Calu3 (cell line): ENCODE measurements at regions of chr2 and their contacts with region 1.

Region 1: GRCh38 chr2:165874445-165875039 is 79.0 kb downstream of the TTC21B start:
- DNase-seq: peak; percentile 24
- H3K4me3 Mint-ChIP-seq: no peak overlapping the region
- H3K27ac Mint-ChIP-seq: no peak overlapping the region
- H3K4me1 Mint-ChIP-seq: no peaks in the 10 kb centered on the region
- H3K27me3 Mint-ChIP-seq: no peaks in the 10 kb centered on the region
- CTCF ChIP-seq: peak; percentile 51

Region 2: DNA sequence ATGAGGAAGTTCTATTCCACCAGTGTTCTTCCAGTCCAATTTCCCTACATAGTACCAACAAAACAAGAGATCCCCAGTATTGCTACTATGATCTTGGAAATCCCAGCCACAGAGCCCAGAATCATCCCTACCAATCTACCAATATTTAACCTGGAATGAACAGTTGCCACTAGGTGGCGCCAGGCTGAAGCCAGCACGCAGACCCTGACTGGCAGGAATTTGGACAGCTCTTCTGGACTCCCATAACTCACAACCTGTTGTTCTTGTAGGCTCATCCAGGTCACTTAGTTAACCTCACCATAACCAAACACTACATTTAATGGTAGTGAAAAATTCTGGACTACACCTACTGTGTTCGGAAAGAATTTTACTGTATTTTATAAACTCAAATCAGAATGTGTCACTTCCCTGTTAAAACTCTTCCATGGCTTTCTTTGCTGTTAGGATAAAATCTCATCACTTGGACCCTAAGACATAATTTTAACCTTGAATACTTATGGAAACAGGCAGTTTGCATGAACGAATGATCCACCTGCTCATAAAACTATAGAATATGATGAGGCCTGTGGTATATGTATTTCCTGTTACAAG is 859.4 kb before region 1 on chr2:
- CTCF ChIA-PET with region 1: no interaction called
- intact Hi-C with region 1: loop called (anchors 10 kb)
- DNase-seq: peak; percentile 80
- H3K4me3 Mint-ChIP-seq: no peak overlapping the region
- H3K27ac Mint-ChIP-seq: no peak overlapping the region
- H3K4me1 Mint-ChIP-seq: peaks cover 9% of the 10 kb centered on the region
- H3K27me3 Mint-ChIP-seq: no peaks in the 10 kb centered on the region
- CTCF ChIP-seq: peak; percentile 88

Region 3: DNA sequence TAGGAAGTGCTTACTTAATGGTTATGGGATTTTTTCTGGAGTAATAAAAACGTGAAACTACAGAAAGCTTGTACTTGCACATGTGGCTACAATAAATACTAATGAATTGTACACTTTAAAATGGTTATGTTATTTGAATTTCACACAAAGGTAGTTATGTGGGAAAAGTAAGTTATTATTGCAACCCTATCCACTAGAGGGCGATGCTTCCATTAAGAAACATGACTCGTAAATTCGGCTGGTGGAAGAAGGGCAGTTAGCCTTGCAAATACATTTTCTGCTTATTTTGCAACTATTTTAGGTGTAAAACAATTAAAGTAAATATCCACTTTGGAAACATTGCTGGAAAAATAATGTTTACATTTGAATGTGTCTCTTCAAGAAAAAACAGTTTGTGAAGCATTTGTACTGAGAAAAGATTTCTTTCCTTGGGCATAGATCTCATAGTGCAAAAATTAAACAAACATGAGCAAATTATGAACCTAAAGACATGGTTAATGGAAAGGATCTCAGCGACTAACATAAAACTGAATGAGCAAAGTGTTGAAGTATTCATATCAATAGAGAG is 473.2 kb before region 1 on chr2:
- CTCF ChIA-PET with region 1: no interaction called
- intact Hi-C with region 1: loop called (anchors 1 kb)
- DNase-seq: peak; percentile 38
- H3K4me3 Mint-ChIP-seq: no peak overlapping the region
- H3K27ac Mint-ChIP-seq: no peak overlapping the region
- H3K4me1 Mint-ChIP-seq: peaks cover under 1% of the 10 kb centered on the region
- H3K27me3 Mint-ChIP-seq: no peaks in the 10 kb centered on the region
- CTCF ChIP-seq: peak; percentile 40

Region 4: DNA sequence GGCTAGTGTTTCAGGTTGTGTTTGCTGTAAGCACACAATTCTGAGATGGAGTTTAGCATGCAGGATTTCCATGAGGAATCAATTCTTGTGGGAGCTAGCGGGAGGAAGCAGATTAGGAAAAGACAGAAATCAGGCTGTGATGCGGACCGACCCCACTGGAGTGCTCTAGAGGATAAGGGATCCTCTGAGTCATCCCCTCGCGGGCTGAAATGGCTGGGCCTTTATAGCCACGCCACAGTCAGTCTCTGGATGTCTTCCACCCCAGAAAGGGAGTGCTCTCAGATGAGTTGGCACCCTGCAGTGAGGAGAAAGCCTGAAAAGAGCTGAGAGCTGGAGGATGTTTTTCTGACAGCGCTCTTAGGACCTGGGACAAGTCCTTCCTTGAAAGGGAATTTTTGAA is 182.9 kb before region 1 on chr2:
- CTCF ChIA-PET with region 1: interaction called, 3 read pairs
- intact Hi-C with region 1: loop called (anchors 5 kb)
- DNase-seq: no peak
- H3K4me3 Mint-ChIP-seq: no peak overlapping the region
- H3K27ac Mint-ChIP-seq: no peak overlapping the region
- H3K4me1 Mint-ChIP-seq: no peaks in the 10 kb centered on the region
- H3K27me3 Mint-ChIP-seq: peaks cover 1% of the 10 kb centered on the region
- CTCF ChIP-seq: no peak

Region 5: DNA sequence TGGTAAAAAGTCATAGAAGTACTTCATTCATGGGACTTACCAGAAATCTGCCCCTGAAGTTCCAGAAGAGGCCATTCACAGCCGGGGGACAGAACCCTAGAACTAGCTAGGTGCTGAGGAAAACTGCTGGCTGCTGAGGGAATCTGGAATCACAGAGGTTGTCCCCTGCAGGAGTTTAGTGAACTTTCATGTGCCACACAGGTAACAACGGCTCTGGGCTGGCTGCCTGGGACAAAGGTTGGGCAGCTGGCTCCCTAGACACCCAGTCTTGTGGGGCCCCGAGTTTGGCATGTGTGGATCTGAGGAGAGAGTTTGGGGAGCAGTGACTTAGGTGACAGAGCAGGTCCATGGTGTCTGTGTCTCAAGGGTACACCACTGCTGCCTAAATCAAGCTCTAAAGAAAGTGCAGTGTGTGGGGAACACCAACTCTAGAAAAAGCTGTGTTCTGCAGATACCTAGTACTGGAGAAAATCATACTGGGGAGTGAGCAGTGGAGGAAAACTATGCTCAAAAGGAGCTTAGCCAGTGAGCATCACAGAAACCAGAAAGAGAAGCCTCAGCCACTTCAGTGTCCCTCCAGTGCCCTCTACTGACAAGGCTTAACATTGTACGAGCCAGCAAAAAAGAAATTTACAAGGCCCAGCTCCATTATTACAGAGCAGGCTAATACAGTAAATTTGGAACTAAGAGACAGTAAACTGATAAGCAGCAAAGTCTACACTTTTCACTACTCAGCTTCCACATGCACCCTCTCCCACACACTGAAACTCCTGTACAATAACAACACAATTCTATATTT is 95.7 kb before region 1 on chr2:
- CTCF ChIA-PET with region 1: interaction called, 13 read pairs
- intact Hi-C with region 1: no loop called
- DNase-seq: peak; percentile 43
- H3K4me3 Mint-ChIP-seq: no peak overlapping the region
- H3K27ac Mint-ChIP-seq: no peak overlapping the region
- H3K4me1 Mint-ChIP-seq: peaks cover 23% of the 10 kb centered on the region
- H3K27me3 Mint-ChIP-seq: no peaks in the 10 kb centered on the region
- CTCF ChIP-seq: peak; percentile 38